ENCODE measurements at regions of chr1 and their contacts with region 1.

Region 1: GRCh38 chr1:12067900-12068821 is 5.1 kb downstream of the TNFRSF8 start:
- DNase-seq: peak; percentile 89
- H3K4me3 Mint-ChIP-seq: peak overlapping the region; percentile 53
- H3K27ac Mint-ChIP-seq: peak overlapping the region; percentile 92
- H3K4me1 Mint-ChIP-seq: peaks cover 52% of the 10 kb centered on the region
- H3K27me3 Mint-ChIP-seq: peaks cover 31% of the 10 kb centered on the region

Region 2: DNA sequence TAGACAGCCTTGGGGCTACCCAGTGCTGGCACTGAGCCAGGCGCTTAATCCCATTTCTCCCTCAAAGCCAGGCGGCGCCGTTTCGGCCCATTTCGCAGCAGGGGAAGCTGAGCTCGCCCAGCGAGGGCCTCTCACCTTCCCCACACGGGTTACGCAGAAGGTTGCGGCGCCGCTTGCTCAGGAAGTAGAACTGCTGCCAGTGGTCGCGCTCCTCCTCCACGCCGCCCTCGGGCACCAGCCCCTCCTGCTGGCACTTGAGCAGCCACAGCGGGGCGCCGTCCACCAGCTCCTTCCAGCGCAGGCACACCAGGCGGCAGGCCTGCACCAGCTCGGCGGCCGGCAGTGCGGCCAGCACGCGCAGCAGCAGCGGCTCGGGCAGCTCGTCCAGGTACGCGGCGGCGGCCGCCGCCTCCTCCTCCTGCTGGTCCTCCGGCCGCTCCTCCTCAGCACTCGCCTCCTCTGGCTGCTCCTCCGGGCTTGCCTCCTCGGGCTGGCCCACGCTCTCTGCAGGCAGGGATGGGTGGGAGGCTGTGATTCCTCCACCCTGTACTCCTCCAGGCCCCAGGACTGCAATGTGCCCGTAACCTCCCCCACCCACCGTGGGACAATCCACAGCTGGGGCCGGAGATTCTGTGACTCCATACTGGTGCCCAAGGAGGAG is 417.7 kb before region 1 on chr1:
- CTCF ChIA-PET with region 1: no interaction called
- intact Hi-C with region 1: no loop called
- DNase-seq: peak; percentile 88
- H3K4me3 Mint-ChIP-seq: peak overlapping the region; percentile 55
- H3K27ac Mint-ChIP-seq: no peak overlapping the region
- H3K4me1 Mint-ChIP-seq: peaks cover 19% of the 10 kb centered on the region
- H3K27me3 Mint-ChIP-seq: no peaks in the 10 kb centered on the region

Region 3: DNA sequence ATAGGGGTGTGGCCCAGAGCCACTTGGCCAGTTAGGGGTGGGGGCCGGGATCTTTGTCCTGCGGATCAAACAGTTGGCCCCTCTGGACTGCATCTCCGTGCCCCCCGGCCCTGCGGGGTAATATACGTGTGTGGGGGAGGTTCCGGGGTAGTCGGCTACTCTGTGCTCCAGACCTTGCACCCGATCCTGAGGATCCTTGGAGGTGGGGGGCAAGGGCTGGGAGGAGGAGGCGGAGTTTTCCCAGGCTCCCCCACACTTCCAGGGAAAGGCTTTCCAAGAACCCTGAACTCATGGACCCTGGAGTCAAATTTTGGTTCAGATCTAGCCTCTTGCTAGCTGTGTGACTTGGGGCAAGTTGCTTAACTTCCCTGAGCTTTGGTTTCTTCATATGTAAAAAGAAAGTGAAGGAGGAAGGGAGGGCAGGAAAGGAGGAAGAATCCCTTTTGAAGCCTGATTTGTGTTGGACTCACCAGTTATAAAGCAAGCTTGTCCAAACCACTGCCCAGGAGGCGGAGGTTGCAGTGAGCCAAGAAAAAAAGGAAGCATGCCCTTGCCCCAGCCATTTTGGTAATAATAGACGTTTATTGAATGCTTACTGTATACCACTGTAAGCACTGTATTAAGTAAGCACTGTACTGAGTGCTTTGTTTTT is 48.2 kb before region 1 on chr1:
- CTCF ChIA-PET with region 1: interaction called, 3 read pairs
- intact Hi-C with region 1: loop called (anchors 2 kb)
- DNase-seq: no peak
- H3K4me3 Mint-ChIP-seq: peak overlapping the region; percentile 82
- H3K27ac Mint-ChIP-seq: peak overlapping the region; percentile 56
- H3K4me1 Mint-ChIP-seq: peaks cover 8% of the 10 kb centered on the region
- H3K27me3 Mint-ChIP-seq: no peaks in the 10 kb centered on the region

Region 4: GRCh38 chr1:12078938-12079861 is 11.0 kb after region 1 on chr1:
- CTCF ChIA-PET with region 1: interaction called, 17 read pairs
- intact Hi-C with region 1: no loop called
- DNase-seq: peak; percentile 78
- H3K4me3 Mint-ChIP-seq: no peak overlapping the region
- H3K27ac Mint-ChIP-seq: no peak overlapping the region
- H3K4me1 Mint-ChIP-seq: peaks cover 18% of the 10 kb centered on the region
- H3K27me3 Mint-ChIP-seq: peaks cover 2% of the 10 kb centered on the region

Region 5: GRCh38 chr1:12184008-12184681 is 116.0 kb after region 1 on chr1:
- CTCF ChIA-PET with region 1: no interaction called
- intact Hi-C with region 1: no loop called
- DNase-seq: no peak
- H3K4me3 Mint-ChIP-seq: no peak overlapping the region
- H3K27ac Mint-ChIP-seq: no peak overlapping the region
- H3K4me1 Mint-ChIP-seq: peaks cover 44% of the 10 kb centered on the region
- H3K27me3 Mint-ChIP-seq: no peaks in the 10 kb centered on the region

Region 6: DNA sequence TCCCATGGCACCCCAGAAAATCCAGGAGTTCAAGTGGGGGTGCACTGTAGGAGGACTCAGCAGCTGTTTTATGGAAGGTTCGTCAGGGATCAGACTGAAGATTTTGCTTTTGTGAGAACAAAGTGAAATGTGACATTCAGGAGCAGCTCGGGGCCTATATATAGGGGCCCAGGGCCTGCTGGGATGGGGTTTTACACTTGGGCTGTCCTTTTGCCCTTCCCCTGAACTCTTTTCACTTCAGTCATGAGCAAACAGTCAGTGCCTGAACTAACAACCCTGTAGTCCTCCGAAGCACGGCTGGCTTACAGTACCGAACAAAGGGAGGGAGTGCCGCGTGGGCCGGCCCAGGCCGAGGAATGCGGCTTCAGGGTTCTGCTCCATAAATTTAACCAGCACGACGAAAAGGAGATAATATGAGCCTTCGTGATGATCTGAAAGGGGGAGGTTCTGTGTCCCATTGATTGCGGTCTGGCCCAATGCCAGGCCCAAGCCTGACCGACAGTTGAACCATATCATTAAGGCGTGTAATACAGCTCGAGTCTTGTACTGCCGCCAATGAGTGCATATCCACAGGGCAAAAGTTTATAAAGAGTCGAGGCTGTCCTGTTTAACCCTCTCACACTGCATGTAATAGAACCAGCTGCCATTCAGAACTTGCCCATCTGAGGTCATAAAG is 409.9 kb after region 1 on chr1:
- CTCF ChIA-PET with region 1: no interaction called
- intact Hi-C with region 1: loop called (anchors 10 kb)
- DNase-seq: peak; percentile 49
- H3K4me3 Mint-ChIP-seq: peak overlapping the region; percentile 59
- H3K27ac Mint-ChIP-seq: peak overlapping the region; percentile 91
- H3K4me1 Mint-ChIP-seq: peaks cover 90% of the 10 kb centered on the region
- H3K27me3 Mint-ChIP-seq: no peaks in the 10 kb centered on the region

Region 7: GRCh38 chr1:12518931-12519692 is 451.0 kb after region 1 on chr1:
- CTCF ChIA-PET with region 1: no interaction called
- intact Hi-C with region 1: loop called (anchors 10 kb)
- DNase-seq: peak; percentile 84
- H3K4me3 Mint-ChIP-seq: no peak overlapping the region
- H3K27ac Mint-ChIP-seq: peak overlapping the region; percentile 67
- H3K4me1 Mint-ChIP-seq: peaks cover 43% of the 10 kb centered on the region
- H3K27me3 Mint-ChIP-seq: no peaks in the 10 kb centered on the region

Measured in activated naive CD4-positive, alpha-beta T cell treated with anti-CD3 and anti-CD28 coated beads for 36 hours (primary cell).